ENCODE measurements at regions of chr1 and their contacts with region 1.

Region 1: GRCh38 chr1:75771978-75772377 is 14.1 kb upstream of the RABGGTB start:
- DNase-seq: no peak

Region 2: DNA sequence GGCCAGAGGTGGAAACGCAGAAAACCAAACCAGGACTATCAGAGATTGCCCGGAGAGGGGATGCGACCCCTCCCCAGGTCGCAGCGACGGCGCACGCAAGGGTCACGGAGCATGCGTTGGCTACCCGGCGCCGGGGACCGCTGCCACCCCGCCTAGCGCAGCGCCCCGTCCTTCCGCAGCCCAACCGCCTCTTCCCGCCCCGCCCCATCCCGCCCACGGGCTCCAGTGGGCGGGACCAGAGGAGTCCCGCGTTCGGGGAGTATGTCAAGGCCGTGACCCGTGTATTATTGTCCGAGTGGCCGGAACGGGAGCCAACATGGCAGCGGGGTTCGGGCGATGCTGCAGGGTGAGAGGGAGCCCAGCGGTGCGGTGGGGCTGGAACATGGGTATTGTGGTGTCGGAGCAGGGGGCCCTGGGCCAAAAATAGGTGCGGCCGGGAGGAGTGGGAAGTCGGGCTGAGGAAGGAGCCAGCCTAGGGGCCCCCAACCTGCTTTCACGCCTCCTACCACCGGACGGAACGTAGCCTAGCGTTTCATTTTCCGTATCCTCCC is 47.4 kb before region 1 on chr1 and contains the start of gene ACADM:
- intact Hi-C with region 1: loop called in 1 of 2 experiments (anchors 10 kb)
- DNase-seq: peak; percentile 95
- total RNA-seq, gene ACADM: 33.4 to 38.1 TPM

Region 3: GRCh38 chr1:75797606-75798216 is 25.7 kb after region 1 on chr1:
- intact Hi-C with region 1: loop called in 1 of 2 experiments (anchors 1 kb)
- DNase-seq: no peak